ENCODE measurements at regions of chr10 and their contacts with region 1.

Region 1: DNA sequence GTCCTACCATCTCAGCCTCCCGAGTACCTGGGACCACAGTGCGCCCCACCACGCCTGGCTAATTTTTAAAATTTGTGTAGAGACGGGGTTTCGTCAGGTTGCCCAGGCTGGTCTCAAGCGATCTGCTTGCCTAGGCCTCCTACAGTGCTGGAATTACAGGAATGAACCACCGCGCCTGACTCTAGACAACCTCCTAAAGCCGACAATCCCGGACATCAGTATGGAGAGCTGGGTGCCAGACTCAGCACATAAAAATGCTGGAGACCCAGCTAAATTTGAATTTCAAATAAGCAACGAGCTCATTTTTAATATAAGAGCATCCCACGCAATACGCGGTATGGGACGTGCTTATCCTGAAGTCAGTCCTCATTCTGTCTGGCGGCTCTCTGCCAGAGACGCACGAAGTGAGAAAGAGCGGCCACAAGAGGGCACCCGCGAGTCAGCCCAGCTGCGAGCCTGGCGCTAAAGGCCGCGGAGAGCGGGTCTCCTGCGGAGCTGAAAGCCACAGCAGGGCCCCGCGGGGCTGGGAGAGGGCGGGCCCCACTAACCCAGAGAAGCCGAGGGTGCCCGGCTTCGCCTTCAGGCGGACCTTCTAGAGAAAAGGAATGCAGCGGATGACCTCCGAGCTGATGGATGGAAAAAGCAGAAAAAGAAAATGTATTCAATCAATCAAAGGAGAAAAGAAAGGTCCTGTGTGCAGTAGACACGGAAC is 7.0 kb downstream of the CALY start:
- DNase-seq: peak; percentile 52
- H3K4me3 ChIP-seq: peak overlapping the region; percentile 33
- CTCF ChIP-seq: peak; percentile 97

Region 2: GRCh38 chr10:132965411-132966057 is 364.1 kb before region 1 on chr10:
- CTCF ChIA-PET with region 1: no interaction called
- POLR2A ChIA-PET with region 1: no interaction called
- DNase-seq: no peak
- H3K4me3 ChIP-seq: no peak overlapping the region
- CTCF ChIP-seq: no peak

Region 3: GRCh38 chr10:133309111-133309719 is 20.4 kb before region 1 on chr10:
- CTCF ChIA-PET with region 1: interaction called, 35 read pairs
- POLR2A ChIA-PET with region 1: no interaction called
- DNase-seq: no peak
- H3K4me3 ChIP-seq: peak overlapping the region; percentile 66
- CTCF ChIP-seq: no peak

Region 4: DNA sequence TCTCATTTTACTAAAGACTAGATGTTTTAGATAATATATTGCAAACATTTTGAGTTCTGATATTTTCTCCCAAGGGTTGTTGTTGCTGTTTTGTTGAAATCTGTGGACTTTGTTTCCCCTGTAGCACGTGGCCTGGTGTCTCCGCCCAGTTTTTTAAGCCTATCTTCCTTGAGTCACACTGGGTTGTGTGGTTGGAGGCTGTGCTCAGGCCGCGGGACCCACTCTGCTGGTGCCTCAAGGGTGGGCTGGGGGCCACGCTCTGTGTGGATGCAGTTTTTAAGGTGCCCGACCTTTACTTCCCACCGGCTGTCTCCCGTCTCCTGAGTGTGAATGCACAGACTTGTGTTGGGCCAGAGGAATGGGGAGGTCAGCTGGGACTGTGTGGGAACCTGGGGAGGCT is 13.3 kb after region 1 on chr10:
- CTCF ChIA-PET with region 1: interaction called, 16 read pairs
- POLR2A ChIA-PET with region 1: no interaction called
- DNase-seq: no peak
- H3K4me3 ChIP-seq: no peak overlapping the region
- CTCF ChIP-seq: no peak

Region 5: GRCh38 chr10:133357285-133358151 is 27.9 kb after region 1 on chr10 and contains the start of gene FUOM:
- CTCF ChIA-PET with region 1: interaction called, 25 read pairs
- POLR2A ChIA-PET with region 1: no interaction called
- DNase-seq: no peak
- H3K4me3 ChIP-seq: peak within 1 kb of the TSS; percentile 64
- CTCF ChIP-seq: no peak

Region 6: DNA sequence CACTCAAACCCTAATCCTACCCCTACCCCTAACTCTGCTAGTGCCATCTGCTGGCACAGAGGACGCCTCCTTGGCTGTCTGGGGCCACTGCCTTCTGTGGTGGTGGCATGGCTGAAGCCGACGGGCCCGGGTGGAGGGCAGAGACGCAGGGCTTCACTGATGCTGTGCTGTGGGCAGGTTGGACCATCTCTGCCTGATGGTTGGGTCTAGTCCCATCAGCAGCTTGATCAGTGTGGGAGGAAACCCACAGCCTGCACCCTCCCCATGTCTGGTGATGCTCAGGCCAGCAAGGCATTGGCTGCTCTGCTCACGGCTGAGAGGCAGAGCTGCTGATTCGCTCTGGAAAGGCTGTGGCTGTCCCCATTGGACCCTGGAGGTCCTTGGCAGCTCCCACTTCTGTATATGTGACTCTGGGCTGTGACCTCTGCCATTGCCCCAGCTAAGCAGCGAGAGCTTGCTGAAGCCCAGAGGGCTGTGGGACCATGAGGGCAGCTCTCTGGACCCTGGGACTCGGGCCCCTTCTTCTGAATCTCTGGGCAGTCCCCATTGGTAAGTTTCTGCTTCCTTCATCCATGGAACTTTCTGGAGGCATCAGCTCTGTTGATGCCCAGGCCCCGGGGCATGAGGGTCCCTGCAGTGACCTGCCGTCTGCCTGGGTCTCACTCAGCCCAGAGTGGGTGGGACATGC is 124.0 kb after region 1 on chr10 and contains the start of gene SCART1:
- CTCF ChIA-PET with region 1: interaction called, 12 read pairs
- POLR2A ChIA-PET with region 1: no interaction called
- DNase-seq: no peak
- H3K4me3 ChIP-seq: no peak within 1 kb of the TSS
- CTCF ChIP-seq: no peak

Region 7: DNA sequence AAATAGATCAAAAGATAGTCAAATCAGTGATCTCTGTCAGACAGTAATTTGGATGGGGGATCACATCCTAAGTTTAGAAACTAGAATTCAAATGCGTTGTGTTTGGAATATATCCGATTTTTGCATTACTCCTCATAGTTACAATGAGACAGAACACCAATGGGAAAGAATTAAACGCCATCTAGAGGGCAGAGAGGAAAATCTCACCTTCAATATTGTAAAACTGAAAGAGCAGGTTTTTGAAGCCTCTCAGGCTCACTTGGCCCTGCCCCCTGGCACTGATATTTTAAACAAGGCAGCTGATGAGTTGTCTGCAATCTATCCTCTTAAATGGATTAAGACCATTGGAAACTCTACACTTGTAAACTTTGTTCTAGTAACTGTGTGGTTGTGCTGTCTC is 279.2 kb after region 1 on chr10:
- CTCF ChIA-PET with region 1: interaction called, 35 read pairs
- POLR2A ChIA-PET with region 1: no interaction called
- DNase-seq: no peak
- H3K4me3 ChIP-seq: no peak overlapping the region
- CTCF ChIP-seq: peak; percentile 19